B cell (primary cell): ENCODE measurements at regions of chr11 and their contacts with region 1.

Region 1: DNA sequence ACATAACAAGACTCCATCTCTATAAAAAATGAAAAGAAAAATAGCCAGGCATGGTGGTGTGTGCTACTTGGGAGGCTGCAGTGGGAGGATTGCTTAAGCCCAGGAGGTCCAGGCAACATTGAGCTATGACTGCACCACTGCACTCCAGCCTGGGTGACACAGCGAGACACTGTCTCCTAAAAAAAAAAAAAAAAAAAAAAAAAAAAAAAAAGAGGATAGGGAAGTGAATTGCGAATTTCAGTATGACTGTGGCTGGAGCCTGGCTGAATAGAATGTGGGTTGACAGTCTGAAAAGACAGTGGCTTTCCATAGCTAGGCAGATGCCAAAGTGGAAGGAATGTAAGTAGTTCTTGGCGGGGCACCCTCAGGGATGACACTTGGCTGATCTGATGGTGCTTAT is 6.4 kb upstream of the LDHAL6A start:
- DNase-seq: no peak
- ATAC-seq: no peak
- H3K4me3 ChIP-seq: no peak overlapping the region
- H3K4me3 Mint-ChIP-seq: no peak overlapping the region
- H3K27ac ChIP-seq: no peak overlapping the region
- H3K27ac Mint-ChIP-seq: no peak overlapping the region
- H3K4me1 ChIP-seq: no peaks in the 10 kb centered on the region
- H3K4me1 Mint-ChIP-seq: peaks cover 3% of the 10 kb centered on the region
- H3K27me3 ChIP-seq: no peaks in the 10 kb centered on the region
- H3K27me3 Mint-ChIP-seq: peaks cover 15% of the 10 kb centered on the region
- CTCF ChIP-seq: no peak

Region 2: GRCh38 chr11:18692941-18693760 is 243.9 kb after region 1 on chr11:
- CTCF ChIA-PET with region 1: no interaction called
- POLR2A ChIA-PET with region 1: interaction called, 12 read pairs
- intact Hi-C with region 1: no loop called
- DNase-seq: no peak
- ATAC-seq: no peak
- H3K4me3 ChIP-seq: no peak overlapping the region
- H3K4me3 Mint-ChIP-seq: no peak overlapping the region
- H3K27ac ChIP-seq: no peak overlapping the region
- H3K27ac Mint-ChIP-seq: no peak overlapping the region
- H3K4me1 ChIP-seq: peaks cover 2 to 3% of the 10 kb centered on the region in 2 donors
- H3K4me1 Mint-ChIP-seq: peaks cover 3% of the 10 kb centered on the region
- H3K27me3 ChIP-seq: peaks cover 0 to 2% (median 0%) of the 10 kb centered on the region in 4 experiments
- H3K27me3 Mint-ChIP-seq: peaks cover 4% of the 10 kb centered on the region
- CTCF ChIP-seq: no peak